GM10248 (cell line): ENCODE measurements at regions of chr1 and their contacts with region 1.

Region 1: DNA sequence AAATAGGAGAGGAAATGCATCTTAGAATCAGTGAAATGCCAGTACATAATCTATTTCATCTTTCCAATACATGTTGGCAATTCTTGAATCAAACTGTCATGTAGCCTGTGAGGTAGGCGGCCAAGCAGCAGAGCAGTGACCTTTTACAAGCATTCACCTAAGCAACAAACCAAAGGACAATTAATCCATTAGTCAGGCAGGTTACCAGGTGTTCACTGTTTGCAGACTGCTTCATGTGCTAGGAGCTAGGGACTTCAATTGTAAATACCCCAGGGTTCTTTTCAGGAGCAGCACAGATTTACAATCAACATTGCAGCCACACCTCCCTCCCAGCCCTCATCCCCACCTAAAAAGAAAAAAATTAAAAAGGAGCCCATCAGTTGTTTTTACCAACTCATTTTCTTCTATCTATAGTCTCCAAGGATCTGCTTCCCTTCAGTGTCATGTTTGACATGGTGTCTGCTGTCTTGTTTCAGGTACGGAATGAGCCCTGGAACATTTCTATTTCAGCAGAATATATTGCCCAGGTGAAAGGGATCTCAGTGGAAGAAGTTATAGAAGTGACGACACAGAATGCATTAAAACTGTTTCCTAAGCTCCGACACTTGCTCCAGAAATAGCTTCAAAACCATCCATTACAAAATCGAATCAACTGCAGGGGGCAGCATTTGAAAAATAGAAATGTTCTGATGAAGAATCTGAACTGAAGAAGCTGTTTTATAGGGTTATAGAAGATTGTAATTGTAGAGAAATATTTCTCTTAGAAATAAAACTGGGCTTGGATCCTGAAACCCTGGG is 23.0 kb downstream of the TATDN3 start:
- DNase-seq: no peak
- CTCF ChIP-seq: no peak

Region 2: DNA sequence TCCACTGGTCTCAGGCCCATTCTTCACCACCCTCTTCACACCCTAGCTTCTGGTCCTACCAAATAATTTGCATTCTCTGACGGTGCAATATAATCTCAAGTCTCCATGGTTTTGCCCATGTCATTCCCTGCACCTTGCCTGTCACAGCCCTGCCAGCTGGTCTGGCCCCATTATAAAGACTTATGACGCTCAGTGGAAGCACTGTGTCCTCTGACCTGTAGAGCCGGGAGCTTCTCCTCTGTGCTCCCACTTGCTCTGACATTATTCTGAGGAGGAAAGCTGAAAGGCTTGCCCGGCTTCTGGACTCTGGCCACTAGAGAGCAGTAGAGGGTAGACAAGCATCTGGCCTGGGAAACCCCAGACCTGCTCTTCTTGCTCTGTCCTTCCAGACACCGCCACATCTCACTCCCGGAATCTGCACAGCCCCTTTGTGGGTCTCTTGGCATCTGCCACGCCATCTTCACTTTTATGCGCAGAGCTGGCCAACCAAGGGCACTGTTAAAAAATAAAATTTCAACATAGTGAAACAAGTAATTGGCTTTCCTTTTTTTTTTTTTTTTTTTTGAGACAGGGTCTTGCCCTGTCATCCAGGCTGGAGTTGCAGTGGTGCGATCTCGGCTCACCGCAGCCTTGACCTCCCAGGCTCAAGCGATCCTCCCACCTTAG is 337.6 kb before region 1 on chr1:
- CTCF ChIA-PET with region 1: no interaction called
- POLR2A ChIA-PET with region 1: no interaction called
- DNase-seq: peak; percentile 87
- CTCF ChIP-seq: peak; percentile 90

Region 3: DNA sequence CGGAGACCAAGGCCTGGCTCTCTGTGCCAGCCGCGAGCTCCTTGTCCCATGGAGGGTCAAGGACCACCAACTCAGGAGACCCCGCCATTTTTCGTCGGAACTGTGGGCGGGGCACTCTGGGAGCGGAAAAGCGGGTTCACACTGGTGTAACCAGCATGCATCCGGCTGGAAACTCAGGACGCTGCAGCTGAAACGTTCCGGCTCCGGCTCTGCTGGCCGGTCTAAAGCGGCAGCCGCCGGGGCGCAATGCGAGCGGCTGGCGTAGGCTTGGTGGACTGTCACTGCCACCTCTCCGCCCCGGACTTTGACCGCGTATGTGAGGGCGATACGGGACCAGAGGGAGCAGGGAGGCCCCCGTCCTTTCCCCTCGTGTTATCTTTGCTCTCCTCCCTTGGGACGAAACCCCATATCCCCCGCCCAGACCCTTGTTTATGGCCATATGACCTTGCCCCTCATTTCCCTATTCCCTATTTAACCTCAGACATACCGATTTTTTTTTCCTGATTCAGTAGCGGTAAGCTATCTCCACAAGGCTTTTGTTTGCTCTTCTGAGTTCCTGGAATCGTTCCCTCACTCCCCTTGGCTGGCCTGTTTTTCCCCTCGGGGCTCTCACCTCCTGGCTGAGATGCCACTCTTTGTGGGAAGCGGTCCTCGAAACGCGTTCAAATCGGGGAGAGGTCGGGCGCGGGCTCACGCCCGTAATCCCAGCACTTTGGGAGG is 22.9 kb before region 1 on chr1 and contains the starts of genes NSL1 and TATDN3:
- CTCF ChIA-PET with region 1: interaction called, 33 read pairs
- POLR2A ChIA-PET with region 1: interaction called, 3 read pairs
- DNase-seq: peak; percentile 84
- CTCF ChIP-seq: no peak

Region 4: DNA sequence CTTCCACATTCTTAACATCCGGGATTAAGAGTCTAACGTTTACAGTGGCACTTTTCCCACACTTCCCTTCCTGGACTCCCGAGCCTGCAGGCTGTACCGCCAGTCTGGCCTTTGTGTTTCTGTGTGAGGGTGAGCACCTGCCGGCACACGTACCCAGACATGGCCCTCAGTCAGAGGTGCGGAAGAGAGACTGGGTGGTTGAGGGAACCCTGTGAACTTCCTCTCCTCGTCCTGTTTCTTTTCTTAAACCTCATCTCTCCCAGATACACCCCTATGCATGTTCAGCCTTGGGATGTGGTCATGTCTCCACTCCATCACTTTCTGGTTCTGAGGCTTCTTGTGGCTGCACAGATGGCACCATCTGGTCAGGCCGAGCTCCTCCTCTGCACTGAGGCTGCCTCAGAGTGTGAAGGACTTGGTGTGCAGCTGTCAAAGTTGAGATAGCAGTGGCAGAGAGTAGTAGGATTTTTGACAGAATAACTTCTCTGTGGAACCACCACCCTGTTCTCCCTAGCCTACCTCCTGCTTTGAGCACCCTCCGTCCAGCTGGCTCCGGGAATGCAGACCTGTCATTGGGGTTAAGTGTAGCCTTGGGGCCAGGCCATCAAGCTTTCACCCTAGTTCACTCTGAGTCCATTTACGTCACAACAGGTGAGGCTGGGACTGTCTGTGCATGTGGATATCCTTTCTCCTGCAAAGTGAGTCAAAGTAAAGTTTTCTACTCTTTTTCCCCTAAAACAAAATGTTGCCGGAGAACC is 167.0 kb after region 1 on chr1:
- CTCF ChIA-PET with region 1: interaction called, 6 read pairs
- POLR2A ChIA-PET with region 1: interaction called, 11 read pairs
- DNase-seq: no peak
- CTCF ChIP-seq: no peak